Right cardiac atrium (tissue), 5 donors: ENCODE measurements at regions of chr14 and their contacts with region 1.

Region 1: GRCh38 chr14:105294142-105294597 is 6.6 kb downstream of the BRF1 start:
- DNase-seq: peak; percentile 68 to 89 (median 86)
- ATAC-seq: peak; percentile 95 to 96
- H3K4me3 ChIP-seq: no peak overlapping the region
- H3K27ac ChIP-seq: peak overlapping the region; percentile 34
- H3K4me1 ChIP-seq: peaks cover 7% of the 10 kb centered on the region
- H3K27me3 ChIP-seq: no peaks in the 10 kb centered on the region

Region 2: DNA sequence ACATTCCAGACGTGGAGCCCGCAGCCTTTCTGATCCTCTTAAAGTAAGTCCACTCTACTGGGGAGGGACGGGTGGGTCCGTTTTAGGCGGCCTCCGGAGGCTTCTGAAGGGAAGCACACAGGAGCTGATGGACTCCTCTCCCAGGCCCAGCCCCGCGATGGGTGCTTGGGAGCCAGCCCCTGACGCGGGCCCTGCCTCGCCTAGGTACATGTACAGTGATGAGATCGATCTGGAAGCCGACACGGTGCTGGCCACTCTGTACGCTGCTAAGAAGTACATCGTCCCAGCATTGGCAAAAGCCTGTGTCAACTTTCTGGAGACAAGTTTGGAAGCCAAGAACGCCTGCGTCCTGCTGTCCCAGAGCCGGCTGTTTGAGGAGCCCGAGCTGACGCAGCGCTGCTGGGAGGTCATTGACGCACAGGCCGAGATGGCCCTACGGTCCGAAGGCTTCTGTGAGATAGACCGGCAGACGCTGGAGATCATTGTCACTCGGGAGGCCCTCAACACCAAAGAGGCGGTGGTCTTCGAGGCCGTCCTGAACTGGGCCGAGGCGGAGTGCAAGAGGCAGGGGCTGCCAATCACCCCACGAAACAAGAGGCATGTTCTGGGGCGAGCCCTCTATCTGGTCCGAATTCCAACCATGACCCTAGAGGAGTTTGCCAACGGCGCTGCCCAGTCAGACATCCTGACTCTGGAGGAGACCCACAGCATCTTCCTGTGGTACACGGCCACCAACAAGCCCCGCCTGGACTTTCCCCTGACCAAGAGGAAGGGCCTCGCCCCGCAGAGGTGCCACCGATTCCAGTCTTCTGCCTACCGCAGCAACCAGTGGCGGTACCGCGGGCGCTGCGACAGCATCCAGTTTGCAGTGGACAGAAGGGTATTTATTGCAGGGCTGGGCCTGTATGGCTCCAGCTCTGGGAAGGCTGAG is 44.5 kb before region 1 on chr14:
- intact Hi-C with region 1: loop called in 1 of 4 experiments (anchors 2 kb)
- DNase-seq: peak; percentile 46 to 69 (median 68)
- ATAC-seq: peak; percentile 2 to 18
- H3K4me3 ChIP-seq: no peak overlapping the region
- H3K27ac ChIP-seq: peak overlapping the region; percentile 88
- H3K4me1 ChIP-seq: peaks cover 2% of the 10 kb centered on the region
- H3K27me3 ChIP-seq: no peaks in the 10 kb centered on the region